PC-3 (cell line): ENCODE measurements at regions of chr5 and their contacts with region 1.

Region 1: GRCh38 chr5:100858987-100859545 is 44.0 kb downstream of the ST8SIA4 start:
- DNase-seq: peak; percentile 79
- ATAC-seq: peak; percentile 96
- H3K4me3 ChIP-seq: peak overlapping the region; percentile 15; the same call in 1 of the 2 replicates
- H3K27ac ChIP-seq: peak overlapping the region; percentile 43
- H3K4me1 ChIP-seq: peaks cover 17% of the 10 kb centered on the region
- H3K27me3 ChIP-seq: no peaks in the 10 kb centered on the region
- CTCF ChIP-seq: no peak

Region 2: GRCh38 chr5:100634937-100635534 is 224.0 kb before region 1 on chr5:
- CTCF ChIA-PET with region 1: no interaction called
- POLR2A ChIA-PET with region 1: no interaction called
- intact Hi-C with region 1: loop called (anchors 1 kb)
- DNase-seq: peak; percentile 85
- ATAC-seq: peak; percentile 96
- H3K4me3 ChIP-seq: no peak overlapping the region
- H3K27ac ChIP-seq: peak overlapping the region; percentile 38
- H3K4me1 ChIP-seq: peaks cover 15% of the 10 kb centered on the region
- H3K27me3 ChIP-seq: no peaks in the 10 kb centered on the region
- CTCF ChIP-seq: no peak

Region 3: DNA sequence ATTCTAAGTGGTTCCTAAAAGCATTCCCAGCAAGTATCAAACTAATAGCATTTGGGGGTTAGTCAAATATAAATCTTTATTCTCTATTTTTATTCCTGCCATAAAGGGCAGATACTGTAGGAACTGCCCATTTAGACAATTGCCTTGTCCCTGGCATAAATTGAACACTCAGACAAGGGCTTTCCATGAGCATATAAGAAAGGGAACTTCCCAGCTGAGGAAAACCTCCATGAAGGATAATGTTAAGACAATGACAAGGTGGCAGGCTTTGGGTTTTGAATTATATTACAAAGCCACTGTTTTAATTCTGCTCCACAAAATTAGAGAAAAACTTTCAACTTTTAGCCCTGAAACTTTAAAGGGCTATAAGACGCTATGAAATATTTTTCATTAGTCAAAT is 37.3 kb before region 1 on chr5:
- CTCF ChIA-PET with region 1: no interaction called
- POLR2A ChIA-PET with region 1: no interaction called
- intact Hi-C with region 1: loop called (anchors 1 kb)
- DNase-seq: no peak
- ATAC-seq: no peak
- H3K4me3 ChIP-seq: peak overlapping the region; percentile 59; the same call in 1 of the 2 replicates
- H3K27ac ChIP-seq: peak overlapping the region; percentile 94
- H3K4me1 ChIP-seq: peaks cover 25% of the 10 kb centered on the region
- H3K27me3 ChIP-seq: no peaks in the 10 kb centered on the region
- CTCF ChIP-seq: no peak